ENCODE measurements at regions of chr6 and their contacts with region 1.

Region 1: DNA sequence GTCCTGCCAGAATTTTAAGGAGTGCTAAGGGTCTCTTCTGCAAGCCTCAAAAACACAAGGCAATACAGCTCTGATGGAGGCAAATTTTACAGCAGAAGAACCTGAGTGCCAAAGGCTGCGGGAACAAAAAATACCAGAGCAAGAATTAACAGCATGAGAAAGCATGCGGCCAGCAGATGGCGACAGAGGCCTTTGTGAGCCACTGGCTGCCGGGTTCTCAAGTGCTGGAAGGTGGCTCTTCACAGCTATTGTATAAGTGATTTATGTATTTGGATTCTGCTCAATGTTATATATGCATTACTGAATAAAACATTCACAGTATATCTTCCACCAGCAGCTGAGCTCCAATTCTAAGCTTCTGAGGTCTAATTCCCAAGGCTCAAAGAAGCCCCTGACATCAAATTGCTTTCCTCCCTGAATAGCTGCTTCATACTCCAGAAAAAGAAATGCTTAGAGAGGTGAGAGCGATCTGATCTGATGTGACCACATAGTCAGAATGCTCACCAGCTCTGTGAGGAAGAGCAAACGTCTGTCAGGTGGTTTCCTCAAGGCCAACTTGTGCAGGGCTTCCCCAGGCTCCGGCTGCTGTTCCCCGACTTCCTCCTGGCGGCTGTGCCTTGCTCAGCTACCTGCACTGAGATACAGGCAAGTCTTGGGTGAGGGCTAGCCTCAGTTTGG is 58.6 kb downstream of the PPP1R3G start:
- DNase-seq: peak; percentile 66 to 76 (median 75)
- H3K4me3 ChIP-seq: no peak overlapping the region
- H3K4me3 Mint-ChIP-seq: no peak overlapping the region
- H3K27ac ChIP-seq: no peak overlapping the region
- H3K27ac Mint-ChIP-seq: no peak overlapping the region
- H3K4me1 ChIP-seq: no peaks in the 10 kb centered on the region
- H3K4me1 Mint-ChIP-seq: peaks cover 0 to 1% (median 0%) of the 10 kb centered on the region in 4 donors
- H3K27me3 ChIP-seq: no peaks in the 10 kb centered on the region
- H3K27me3 Mint-ChIP-seq: no peaks in the 10 kb centered on the region

Region 2: GRCh38 chr6:5167501-5167900 is 23.7 kb after region 1 on chr6:
- CTCF ChIA-PET with region 1: interaction called, 13 read pairs
- POLR2A ChIA-PET with region 1: no interaction called
- intact Hi-C with region 1: no loop called
- DNase-seq: no peak
- H3K4me3 ChIP-seq: no peak overlapping the region
- H3K4me3 Mint-ChIP-seq: no peak overlapping the region
- H3K27ac ChIP-seq: no peak overlapping the region
- H3K27ac Mint-ChIP-seq: no peak overlapping the region
- H3K4me1 ChIP-seq: no peaks in the 10 kb centered on the region
- H3K4me1 Mint-ChIP-seq: peaks cover 0 to 2% (median 0%) of the 10 kb centered on the region in 4 donors
- H3K27me3 ChIP-seq: no peaks in the 10 kb centered on the region
- H3K27me3 Mint-ChIP-seq: no peaks in the 10 kb centered on the region

Region 3: DNA sequence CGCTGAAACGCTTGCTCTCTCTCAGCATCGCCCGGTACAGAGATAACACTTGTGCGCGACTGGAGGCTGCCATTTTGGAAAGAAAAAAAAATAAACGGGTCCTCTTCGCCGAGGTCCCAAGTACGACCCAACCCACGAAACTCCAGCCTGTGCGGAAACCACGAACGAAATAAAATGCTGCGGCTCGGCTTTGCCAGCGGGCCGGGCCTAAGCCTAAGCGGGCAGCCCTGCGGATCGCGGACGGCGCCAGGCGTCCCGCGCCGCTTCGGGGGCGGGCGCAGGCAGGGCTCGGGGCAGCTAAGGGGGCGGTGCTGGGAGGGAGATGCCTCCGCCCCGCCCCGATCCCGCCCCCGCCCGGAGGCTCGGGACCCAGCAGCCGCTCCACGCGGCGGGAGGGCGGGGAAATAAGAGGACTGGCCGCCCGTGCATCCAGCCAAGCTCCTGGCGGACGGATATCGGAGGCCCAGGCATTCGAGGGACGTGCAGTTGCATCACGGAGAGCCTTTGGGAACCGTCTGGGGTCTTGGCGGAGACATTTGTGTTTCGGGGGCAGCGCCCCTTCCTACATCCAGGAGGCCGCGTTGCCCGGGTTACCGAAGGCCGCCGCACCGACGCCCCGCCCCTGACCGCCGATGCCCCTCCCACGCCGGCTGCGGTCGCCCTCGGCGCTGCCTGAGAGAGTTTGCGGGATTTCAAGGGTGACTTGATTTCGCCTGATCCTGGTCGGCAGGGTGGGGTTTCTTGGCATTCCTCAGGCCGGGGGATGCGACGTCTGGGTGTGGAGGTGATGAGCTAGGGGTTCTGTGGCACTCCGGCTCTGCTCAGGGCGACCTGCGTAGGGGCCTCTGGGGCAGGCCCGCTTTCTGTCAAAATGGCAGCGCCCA is 117.1 kb after region 1 on chr6 and contains the starts of genes FARS2 and LYRM4:
- CTCF ChIA-PET with region 1: interaction called, 10 read pairs
- POLR2A ChIA-PET with region 1: interaction called, 5 read pairs
- intact Hi-C with region 1: loop called (anchors 1 kb)
- DNase-seq: peak; percentile 90 to 99 (median 96)
- H3K4me3 ChIP-seq: peak within 1 kb of the TSS; percentile 95 to 96
- H3K4me3 Mint-ChIP-seq: peak within 1 kb of the TSS; percentile 96 to 99 (median 99)
- H3K27ac ChIP-seq: peak within 1 kb of the TSS; percentile 95
- H3K27ac Mint-ChIP-seq: peak within 1 kb of the TSS; percentile 99 to 100 (median 100)
- H3K4me1 ChIP-seq: peaks cover 21% of the 10 kb centered on the region
- H3K4me1 Mint-ChIP-seq: peaks cover 18 to 40% (median 27%) of the 10 kb centered on the region in 4 donors
- H3K27me3 ChIP-seq: no peaks in the 10 kb centered on the region
- H3K27me3 Mint-ChIP-seq: no peaks in the 10 kb centered on the region
- total RNA-seq, gene FARS2: 15.6 to 19.2 TPM
- total RNA-seq, gene LYRM4: 10.6 to 14.3 TPM

Region 4: DNA sequence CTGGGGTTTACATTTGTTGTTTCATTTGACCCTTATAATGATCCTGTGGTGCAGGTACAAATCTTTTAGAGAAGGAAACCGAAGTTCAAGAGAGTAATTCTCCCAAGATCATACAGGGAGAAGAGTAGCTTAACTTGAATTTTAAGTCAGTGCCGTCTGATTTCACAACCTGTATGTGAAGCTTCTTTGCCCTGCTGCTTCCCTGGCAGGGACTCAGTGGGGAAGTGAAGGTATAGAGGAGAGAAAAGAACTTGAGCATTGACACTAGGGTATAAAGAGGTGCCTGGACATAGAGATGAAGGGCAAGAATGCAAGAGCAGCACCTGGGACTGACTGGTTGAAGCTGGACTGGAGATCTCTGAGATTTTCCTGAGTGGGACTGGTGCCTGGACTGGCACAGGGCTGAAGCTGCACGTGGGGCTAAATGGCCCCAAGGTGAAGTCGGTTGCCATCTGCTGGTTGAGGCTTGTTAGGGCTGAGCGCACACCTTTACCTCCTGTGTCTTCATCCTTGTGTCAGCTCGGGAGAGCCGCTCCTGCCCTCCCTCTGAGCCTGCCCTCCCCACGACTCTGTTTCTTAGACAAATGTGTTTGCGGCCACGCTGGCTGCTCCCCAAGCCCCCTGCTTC is 159.3 kb after region 1 on chr6:
- CTCF ChIA-PET with region 1: interaction called, 259 read pairs
- POLR2A ChIA-PET with region 1: interaction called, 5 read pairs
- intact Hi-C with region 1: loop called (anchors 1 kb)
- DNase-seq: peak; percentile 56 to 66 (median 62)
- H3K4me3 ChIP-seq: no peak overlapping the region
- H3K4me3 Mint-ChIP-seq: peak overlapping the region in 7 of 8 donors; percentile 43 to 78 (median 71)
- H3K27ac ChIP-seq: no peak overlapping the region
- H3K27ac Mint-ChIP-seq: peak overlapping the region in 6 of 7 donors; percentile 1 to 67 (median 63)
- H3K4me1 ChIP-seq: peaks cover 26% of the 10 kb centered on the region
- H3K4me1 Mint-ChIP-seq: peaks cover 25 to 46% (median 38%) of the 10 kb centered on the region in 4 donors
- H3K27me3 ChIP-seq: no peaks in the 10 kb centered on the region
- H3K27me3 Mint-ChIP-seq: no peaks in the 10 kb centered on the region

Region 5: GRCh38 chr6:5398530-5398929 is 254.8 kb after region 1 on chr6:
- CTCF ChIA-PET with region 1: interaction called, 34 read pairs
- POLR2A ChIA-PET with region 1: no interaction called
- intact Hi-C with region 1: loop called (anchors 1 kb)
- DNase-seq: peak in 4 of 5 donors; percentile 32 to 40 (median 36)
- H3K4me3 ChIP-seq: no peak overlapping the region
- H3K4me3 Mint-ChIP-seq: no peak overlapping the region
- H3K27ac ChIP-seq: no peak overlapping the region
- H3K27ac Mint-ChIP-seq: no peak overlapping the region
- H3K4me1 ChIP-seq: no peaks in the 10 kb centered on the region
- H3K4me1 Mint-ChIP-seq: peaks cover 5 to 24% (median 14%) of the 10 kb centered on the region in 4 donors
- H3K27me3 ChIP-seq: no peaks in the 10 kb centered on the region
- H3K27me3 Mint-ChIP-seq: no peaks in the 10 kb centered on the region

Region 6: GRCh38 chr6:6547110-6547879 is 1403.5 kb after region 1 on chr6:
- CTCF ChIA-PET with region 1: interaction called, 60 read pairs
- POLR2A ChIA-PET with region 1: interaction called, 4 read pairs
- intact Hi-C with region 1: loop called (anchors 1 kb)
- DNase-seq: peak; percentile 65 to 77 (median 73)
- H3K4me3 ChIP-seq: peak overlapping the region; percentile 17 to 35
- H3K4me3 Mint-ChIP-seq: peak overlapping the region; percentile 55 to 84 (median 77)
- H3K27ac ChIP-seq: no peak overlapping the region
- H3K27ac Mint-ChIP-seq: peak overlapping the region in 2 of 7 donors; percentile 44 to 48
- H3K4me1 ChIP-seq: peaks cover 12% of the 10 kb centered on the region
- H3K4me1 Mint-ChIP-seq: peaks cover 3 to 12% (median 4%) of the 10 kb centered on the region in 4 donors
- H3K27me3 ChIP-seq: peaks cover 9% of the 10 kb centered on the region
- H3K27me3 Mint-ChIP-seq: peaks cover 27 to 38% of the 10 kb centered on the region in 2 donors